Activated CD4-positive, alpha-beta T cell treated with anti-CD3 and anti-CD28 coated beads, Interleukin-2, amount 10 ng/mL, durations not matched to agents 7 days and 5 days (primary cell): ENCODE measurements at regions of chr19 and their contacts with region 1.

Region 1: DNA sequence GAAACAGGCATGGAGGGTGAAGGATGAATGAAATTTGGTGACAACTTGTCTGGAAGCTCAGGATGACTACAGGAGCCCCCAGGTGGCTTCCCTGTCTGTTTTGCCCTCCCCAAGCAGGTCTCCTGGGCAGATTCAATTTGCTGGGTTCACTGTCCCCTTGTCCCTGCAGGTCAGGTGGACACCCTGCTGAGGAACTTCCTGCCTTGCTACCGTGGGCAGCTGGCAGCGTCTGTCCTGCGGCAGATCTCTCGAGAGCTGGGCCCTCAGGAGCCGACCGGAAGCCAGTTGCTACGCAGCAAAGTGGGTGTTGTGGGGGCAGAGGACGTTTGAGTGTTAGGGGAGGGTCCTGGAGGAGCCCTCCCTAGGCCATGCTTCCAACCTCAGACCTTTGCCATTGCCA is 19.1 kb downstream of the PGLS start:
- DNase-seq: no peak
- H3K4me3 Mint-ChIP-seq: no peak overlapping the region
- H3K27ac Mint-ChIP-seq: no peak overlapping the region
- H3K4me1 Mint-ChIP-seq: peaks cover 9% of the 10 kb centered on the region
- H3K27me3 Mint-ChIP-seq: no peaks in the 10 kb centered on the region

Region 2: GRCh38 chr19:17519967-17520366 is 10.6 kb before region 1 on chr19:
- CTCF ChIA-PET with region 1: interaction called, 12 read pairs
- POLR2A ChIA-PET with region 1: no interaction called
- DNase-seq: no peak
- H3K4me3 Mint-ChIP-seq: no peak overlapping the region
- H3K27ac Mint-ChIP-seq: no peak overlapping the region
- H3K4me1 Mint-ChIP-seq: peaks cover 25% of the 10 kb centered on the region
- H3K27me3 Mint-ChIP-seq: no peaks in the 10 kb centered on the region

Region 3: GRCh38 chr19:17599780-17600179 is 69.2 kb after region 1 on chr19:
- CTCF ChIA-PET with region 1: no interaction called
- POLR2A ChIA-PET with region 1: no interaction called
- DNase-seq: no peak
- H3K4me3 Mint-ChIP-seq: no peak overlapping the region
- H3K27ac Mint-ChIP-seq: no peak overlapping the region
- H3K4me1 Mint-ChIP-seq: peaks cover 3% of the 10 kb centered on the region
- H3K27me3 Mint-ChIP-seq: peaks cover 31% of the 10 kb centered on the region